SK-N-SH (cell line): ENCODE measurements at regions of chr5 and their contacts with region 1.

Region 1: GRCh38 chr5:139422307-139422893 is 16.9 kb downstream of the DNAJC18 start:
- DNase-seq: peak; percentile 74
- H3K4me3 ChIP-seq: peak overlapping the region in 1 of 2 experiments; percentile 4; a peak in 1 of 4 replicates
- H3K27ac ChIP-seq: peak overlapping the region in 1 of 2 experiments; percentile 42; a peak in 1 of 4 replicates
- H3K4me1 ChIP-seq: peaks cover 8 to 9% of the 10 kb centered on the region in 2 experiments; a peak in 3 of 4 replicates
- H3K27me3 ChIP-seq: no peaks in the 10 kb centered on the region
- CTCF ChIP-seq: peak; percentile 96
- EP300 ChIP-seq: no peak
- RAD21 ChIP-seq: peak; percentile 97

Region 2: DNA sequence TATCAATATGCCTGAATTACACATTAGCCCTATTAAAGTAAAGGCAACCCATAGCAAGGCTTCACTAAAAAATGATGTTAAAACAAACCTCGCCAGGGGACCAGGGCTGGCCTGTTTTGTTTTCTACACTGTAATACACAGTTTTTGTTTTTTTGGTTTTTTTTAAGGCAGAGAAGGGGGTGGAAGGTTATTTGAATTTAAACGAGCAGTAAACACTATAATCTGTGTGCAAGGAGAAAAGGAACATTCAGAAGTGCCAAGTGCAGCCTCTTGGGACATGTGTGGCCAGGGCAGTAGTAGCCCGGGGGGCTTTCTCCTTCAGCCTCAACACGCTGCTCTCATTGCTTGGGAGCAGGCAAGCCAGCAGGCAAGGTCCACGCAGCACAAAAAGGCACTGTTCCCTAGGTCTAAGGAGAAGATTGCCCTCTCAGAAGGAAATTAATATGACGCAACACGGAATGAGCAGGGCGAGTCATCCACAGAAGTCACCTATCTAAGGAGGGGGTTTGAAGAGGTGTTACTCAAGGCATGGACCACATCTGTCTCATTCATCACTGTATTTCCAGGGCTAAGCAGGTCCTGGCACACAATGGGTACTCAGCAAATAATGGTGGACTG is 240.5 kb before region 1 on chr5:
- CTCF ChIA-PET with region 1: no interaction called
- POLR2A ChIA-PET with region 1: no interaction called
- DNase-seq: no peak
- H3K4me3 ChIP-seq: no peak overlapping the region
- H3K27ac ChIP-seq: peak overlapping the region in 1 of 2 experiments; percentile 78; a peak in 2 of 4 replicates
- H3K4me1 ChIP-seq: peaks cover 31 to 57% of the 10 kb centered on the region in 2 experiments
- H3K27me3 ChIP-seq: no peaks in the 10 kb centered on the region
- CTCF ChIP-seq: no peak
- EP300 ChIP-seq: no peak
- RAD21 ChIP-seq: no peak

Region 3: GRCh38 chr5:139410993-139411828 is 11.2 kb before region 1 on chr5:
- CTCF ChIA-PET with region 1: interaction called, 39 read pairs
- POLR2A ChIA-PET with region 1: no interaction called
- DNase-seq: no peak
- H3K4me3 ChIP-seq: no peak overlapping the region
- H3K27ac ChIP-seq: peak overlapping the region in 1 of 2 experiments; percentile 47; a peak in 2 of 4 replicates
- H3K4me1 ChIP-seq: peaks cover 0 to 19% of the 10 kb centered on the region in 2 experiments; a peak in 1 of 4 replicates
- H3K27me3 ChIP-seq: no peaks in the 10 kb centered on the region
- CTCF ChIP-seq: no peak
- EP300 ChIP-seq: peak in 1 of 2 experiments; percentile 51; a peak in 1 of 4 replicates
- RAD21 ChIP-seq: no peak

Region 4: GRCh38 chr5:139445325-139446070 is 23.1 kb after region 1 on chr5:
- CTCF ChIA-PET with region 1: interaction called, 12 read pairs
- POLR2A ChIA-PET with region 1: no interaction called
- DNase-seq: no peak
- H3K4me3 ChIP-seq: no peak overlapping the region
- H3K27ac ChIP-seq: peak overlapping the region; percentile 76 to 87; a peak in 3 of 4 replicates
- H3K4me1 ChIP-seq: peaks cover 0 to 26% of the 10 kb centered on the region in 2 experiments; a peak in 3 of 4 replicates
- H3K27me3 ChIP-seq: no peaks in the 10 kb centered on the region
- CTCF ChIP-seq: no peak
- EP300 ChIP-seq: no peak; a peak in 1 of 4 replicates
- RAD21 ChIP-seq: no peak

Region 5: DNA sequence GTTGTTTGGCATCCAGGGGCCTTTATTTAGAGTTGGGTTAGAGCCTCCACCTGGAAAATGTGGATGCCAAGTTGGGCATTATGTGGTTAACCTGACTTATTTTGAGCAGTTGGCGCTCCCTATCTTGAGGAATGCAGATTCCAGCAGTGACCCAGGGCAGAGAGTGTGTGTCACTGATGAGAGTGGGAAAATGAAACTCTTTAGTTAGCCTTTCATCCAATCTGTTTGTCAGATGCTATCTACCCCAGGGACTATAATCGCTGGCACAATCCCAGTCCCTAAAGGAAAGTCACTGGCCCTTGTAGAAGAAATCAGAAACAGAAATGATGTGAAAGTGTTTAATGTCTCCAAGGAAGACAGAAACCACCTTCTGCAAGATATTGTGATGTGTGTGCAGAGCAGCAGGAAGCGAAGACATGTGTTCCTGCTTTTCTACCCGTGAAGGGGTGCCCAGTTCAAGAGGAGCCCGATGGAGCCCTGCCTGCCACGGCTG is 70.3 kb after region 1 on chr5:
- CTCF ChIA-PET with region 1: interaction called, 11 read pairs
- POLR2A ChIA-PET with region 1: no interaction called
- DNase-seq: no peak
- H3K4me3 ChIP-seq: peak overlapping the region; percentile 21 to 22; a peak in 2 of 4 replicates
- H3K27ac ChIP-seq: peak overlapping the region; percentile 68 to 84; a peak in 3 of 4 replicates
- H3K4me1 ChIP-seq: peaks cover 2 to 27% of the 10 kb centered on the region in 2 experiments; a peak in 3 of 4 replicates
- H3K27me3 ChIP-seq: no peaks in the 10 kb centered on the region
- CTCF ChIP-seq: peak; percentile 29; the same call in 1 of the 2 replicates
- EP300 ChIP-seq: no peak; a peak in 2 of 4 replicates
- RAD21 ChIP-seq: no peak